ENCODE measurements at regions of chr12 and their contacts with region 1.

Region 1: DNA sequence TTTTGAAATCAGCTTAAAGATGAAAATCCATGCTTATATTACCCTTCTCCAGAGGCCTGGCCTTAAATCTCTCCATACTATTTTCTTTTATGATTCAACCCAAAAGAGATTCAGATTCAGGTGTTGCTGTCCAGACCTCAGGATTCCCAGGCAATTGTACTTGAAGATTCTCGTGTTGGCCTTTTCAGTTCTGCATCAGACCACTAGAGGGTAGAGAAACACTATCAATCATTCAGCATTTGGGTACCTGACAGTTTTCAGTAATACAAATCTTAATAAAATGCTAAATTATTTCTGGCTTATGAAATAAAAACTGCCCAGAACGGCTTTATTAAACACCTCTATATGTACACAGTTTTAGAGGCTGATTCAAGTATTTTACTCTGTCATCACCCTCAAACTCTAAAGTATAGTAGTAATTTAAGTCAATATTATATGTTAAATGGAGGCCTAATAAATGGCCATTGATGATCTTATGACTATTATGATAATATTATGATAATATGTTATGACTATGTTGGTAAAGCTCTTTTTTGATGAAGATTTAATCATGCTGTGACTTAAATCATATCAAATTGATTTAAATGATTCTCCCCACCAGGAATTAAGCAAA is 301.1 kb downstream of the DUSP6 start:
- DNase-seq: peak; percentile 74
- ATAC-seq: peak; percentile 53
- H3K4me3 ChIP-seq: no peak overlapping the region
- H3K4me3 Mint-ChIP-seq: no peak overlapping the region
- H3K27ac ChIP-seq: no peak overlapping the region
- H3K27ac Mint-ChIP-seq: no peak overlapping the region
- H3K4me1 ChIP-seq: no peaks in the 10 kb centered on the region
- H3K4me1 Mint-ChIP-seq: no peaks in the 10 kb centered on the region
- H3K27me3 ChIP-seq: no peaks in the 10 kb centered on the region
- H3K27me3 Mint-ChIP-seq: peaks cover 8% of the 10 kb centered on the region
- CTCF ChIP-seq: peak; percentile 88

Region 2: GRCh38 chr12:89106950-89107349 is 55.8 kb after region 1 on chr12:
- CTCF ChIA-PET with region 1: no interaction called
- POLR2A ChIA-PET with region 1: no interaction called
- intact Hi-C with region 1: no loop called
- DNase-seq: no peak
- ATAC-seq: no peak
- H3K4me3 ChIP-seq: no peak overlapping the region
- H3K4me3 Mint-ChIP-seq: no peak overlapping the region
- H3K27ac ChIP-seq: no peak overlapping the region
- H3K27ac Mint-ChIP-seq: no peak overlapping the region
- H3K4me1 ChIP-seq: no peaks in the 10 kb centered on the region
- H3K4me1 Mint-ChIP-seq: no peaks in the 10 kb centered on the region
- H3K27me3 ChIP-seq: peaks cover 0 to under 1% (median 0%) of the 10 kb centered on the region in 4 experiments
- H3K27me3 Mint-ChIP-seq: peaks cover 4% of the 10 kb centered on the region
- CTCF ChIP-seq: no peak

Region 3: GRCh38 chr12:89529738-89530137 is 478.6 kb after region 1 on chr12:
- CTCF ChIA-PET with region 1: interaction called, 14 read pairs
- POLR2A ChIA-PET with region 1: no interaction called
- intact Hi-C with region 1: loop called (anchors 1 kb)
- DNase-seq: peak; percentile 67
- ATAC-seq: no peak
- H3K4me3 ChIP-seq: no peak overlapping the region
- H3K4me3 Mint-ChIP-seq: no peak overlapping the region
- H3K27ac ChIP-seq: no peak overlapping the region
- H3K27ac Mint-ChIP-seq: no peak overlapping the region
- H3K4me1 ChIP-seq: peaks cover 6 to 12% of the 10 kb centered on the region in 2 donors
- H3K4me1 Mint-ChIP-seq: peaks cover 27% of the 10 kb centered on the region
- H3K27me3 ChIP-seq: no peaks in the 10 kb centered on the region
- H3K27me3 Mint-ChIP-seq: no peaks in the 10 kb centered on the region
- CTCF ChIP-seq: peak; percentile 81

Measured in B cell (primary cell).